CD8-positive, alpha-beta T cell (primary cell): ENCODE measurements at regions of chr3 and their contacts with region 1.

Region 1: GRCh38 chr3:33787328-33788009 is 11.0 kb upstream of the PDCD6IP start:
- DNase-seq: peak; percentile 16 to 83 (median 64)
- ATAC-seq: peak; percentile 87
- H3K4me3 ChIP-seq: no peak overlapping the region
- H3K4me3 Mint-ChIP-seq: peak overlapping the region; percentile 57
- H3K27ac ChIP-seq: no peak overlapping the region
- H3K27ac Mint-ChIP-seq: no peak overlapping the region
- H3K4me1 ChIP-seq: no peaks in the 10 kb centered on the region
- H3K4me1 Mint-ChIP-seq: peaks cover 2% of the 10 kb centered on the region
- H3K27me3 ChIP-seq: peaks cover 0 to 3% of the 10 kb centered on the region in 2 experiments
- H3K27me3 Mint-ChIP-seq: peaks cover 23% of the 10 kb centered on the region
- CTCF ChIP-seq: peak; percentile 89

Region 2: GRCh38 chr3:32733631-32734229 is 1053.7 kb before region 1 on chr3:
- CTCF ChIA-PET with region 1: interaction called, 3 read pairs
- POLR2A ChIA-PET with region 1: no interaction called
- intact Hi-C with region 1: loop called in 1 of 2 experiments (anchors 5 kb)
- DNase-seq: peak in 2 of 9 experiments; percentile 20 to 38
- ATAC-seq: no peak
- H3K4me3 ChIP-seq: no peak overlapping the region
- H3K4me3 Mint-ChIP-seq: no peak overlapping the region
- H3K27ac ChIP-seq: no peak overlapping the region
- H3K27ac Mint-ChIP-seq: no peak overlapping the region
- H3K4me1 ChIP-seq: no peaks in the 10 kb centered on the region
- H3K4me1 Mint-ChIP-seq: no peaks in the 10 kb centered on the region
- H3K27me3 ChIP-seq: no peaks in the 10 kb centered on the region
- H3K27me3 Mint-ChIP-seq: no peaks in the 10 kb centered on the region
- CTCF ChIP-seq: peak; percentile 25

Region 3: DNA sequence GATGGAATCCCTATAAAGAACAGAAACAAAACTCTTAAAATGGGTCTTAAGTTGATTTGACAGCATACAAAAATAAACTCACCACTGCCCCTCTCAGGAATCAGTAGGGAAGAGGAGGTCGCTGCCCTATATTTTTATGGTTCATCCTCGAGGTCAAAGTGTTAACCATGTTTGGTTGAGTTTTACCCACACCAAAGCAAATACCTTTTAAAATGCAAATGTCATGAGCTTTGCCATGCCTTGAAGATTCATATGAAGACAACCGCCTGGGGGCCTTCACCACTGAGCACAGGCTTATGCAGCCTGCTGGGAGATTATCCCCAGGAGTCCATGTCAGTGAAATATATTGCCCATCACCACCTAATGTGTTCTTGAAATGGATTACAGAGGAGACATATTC is 756.7 kb before region 1 on chr3:
- CTCF ChIA-PET with region 1: no interaction called
- POLR2A ChIA-PET with region 1: no interaction called
- intact Hi-C with region 1: no loop called
- DNase-seq: peak in 3 of 9 experiments; percentile 33 to 70 (median 61)
- ATAC-seq: peak; percentile 85
- H3K4me3 ChIP-seq: no peak overlapping the region
- H3K4me3 Mint-ChIP-seq: no peak overlapping the region
- H3K27ac ChIP-seq: no peak overlapping the region
- H3K27ac Mint-ChIP-seq: no peak overlapping the region
- H3K4me1 ChIP-seq: no peaks in the 10 kb centered on the region
- H3K4me1 Mint-ChIP-seq: peaks cover 11% of the 10 kb centered on the region
- H3K27me3 ChIP-seq: no peaks in the 10 kb centered on the region
- H3K27me3 Mint-ChIP-seq: no peaks in the 10 kb centered on the region
- CTCF ChIP-seq: no peak

Region 4: GRCh38 chr3:33131331-33132018 is 656.0 kb before region 1 on chr3:
- CTCF ChIA-PET with region 1: interaction called, 31 read pairs
- POLR2A ChIA-PET with region 1: interaction called, 6 read pairs
- intact Hi-C with region 1: loop called (anchors 1 kb)
- DNase-seq: peak in 4 of 9 experiments; percentile 21 to 61 (median 40)
- ATAC-seq: peak; percentile 69
- H3K4me3 ChIP-seq: no peak overlapping the region
- H3K4me3 Mint-ChIP-seq: no peak overlapping the region
- H3K27ac ChIP-seq: no peak overlapping the region
- H3K27ac Mint-ChIP-seq: no peak overlapping the region
- H3K4me1 ChIP-seq: no peaks in the 10 kb centered on the region
- H3K4me1 Mint-ChIP-seq: peaks cover 3% of the 10 kb centered on the region
- H3K27me3 ChIP-seq: no peaks in the 10 kb centered on the region
- H3K27me3 Mint-ChIP-seq: no peaks in the 10 kb centered on the region
- CTCF ChIP-seq: peak; percentile 84

Region 5: DNA sequence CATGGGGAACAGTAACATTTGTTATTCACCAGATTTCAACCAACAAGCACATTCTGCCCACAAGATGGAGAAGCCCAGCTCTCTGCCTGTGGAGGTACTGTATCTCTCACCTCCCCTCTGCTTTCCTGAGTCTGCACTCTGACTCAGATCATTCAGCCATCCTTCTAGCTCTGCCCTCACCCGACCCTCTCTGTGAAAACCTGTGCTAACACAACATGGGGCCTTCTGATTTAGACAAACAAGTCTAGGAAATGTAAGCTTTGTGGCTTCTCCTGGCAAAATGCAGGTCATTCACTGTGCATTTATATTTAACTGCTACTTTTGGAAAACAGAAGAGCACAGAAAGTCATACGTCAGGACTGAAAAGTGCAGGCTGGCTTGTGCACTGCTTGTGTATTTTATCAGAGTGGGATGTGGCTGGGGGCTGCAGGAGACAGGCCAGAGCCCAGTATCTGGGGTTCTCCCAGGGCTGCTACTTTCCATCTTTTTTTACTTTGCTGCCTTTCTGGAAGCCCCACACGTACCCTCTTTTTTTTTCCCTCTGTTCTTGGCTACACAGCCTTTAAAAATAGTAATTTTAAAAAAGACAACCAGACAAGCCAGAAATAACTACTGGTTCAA is 619.6 kb before region 1 on chr3:
- CTCF ChIA-PET with region 1: no interaction called
- POLR2A ChIA-PET with region 1: no interaction called
- intact Hi-C with region 1: no loop called
- DNase-seq: no peak
- ATAC-seq: no peak
- H3K4me3 ChIP-seq: no peak overlapping the region
- H3K4me3 Mint-ChIP-seq: no peak overlapping the region
- H3K27ac ChIP-seq: no peak overlapping the region
- H3K27ac Mint-ChIP-seq: no peak overlapping the region
- H3K4me1 ChIP-seq: no peaks in the 10 kb centered on the region
- H3K4me1 Mint-ChIP-seq: peaks cover 7% of the 10 kb centered on the region
- H3K27me3 ChIP-seq: no peaks in the 10 kb centered on the region
- H3K27me3 Mint-ChIP-seq: peaks cover 3% of the 10 kb centered on the region
- CTCF ChIP-seq: no peak

Region 6: GRCh38 chr3:33636125-33636850 is 151.2 kb before region 1 on chr3:
- CTCF ChIA-PET with region 1: interaction called, 37 read pairs
- POLR2A ChIA-PET with region 1: no interaction called
- intact Hi-C with region 1: loop called (anchors 1 kb)
- DNase-seq: peak in 2 of 9 experiments; percentile 57 to 68
- ATAC-seq: peak; percentile 71
- H3K4me3 ChIP-seq: no peak overlapping the region
- H3K4me3 Mint-ChIP-seq: no peak overlapping the region
- H3K27ac ChIP-seq: no peak overlapping the region
- H3K27ac Mint-ChIP-seq: no peak overlapping the region
- H3K4me1 ChIP-seq: no peaks in the 10 kb centered on the region
- H3K4me1 Mint-ChIP-seq: peaks cover 2% of the 10 kb centered on the region
- H3K27me3 ChIP-seq: no peaks in the 10 kb centered on the region
- H3K27me3 Mint-ChIP-seq: no peaks in the 10 kb centered on the region
- CTCF ChIP-seq: peak; percentile 63

Region 7: DNA sequence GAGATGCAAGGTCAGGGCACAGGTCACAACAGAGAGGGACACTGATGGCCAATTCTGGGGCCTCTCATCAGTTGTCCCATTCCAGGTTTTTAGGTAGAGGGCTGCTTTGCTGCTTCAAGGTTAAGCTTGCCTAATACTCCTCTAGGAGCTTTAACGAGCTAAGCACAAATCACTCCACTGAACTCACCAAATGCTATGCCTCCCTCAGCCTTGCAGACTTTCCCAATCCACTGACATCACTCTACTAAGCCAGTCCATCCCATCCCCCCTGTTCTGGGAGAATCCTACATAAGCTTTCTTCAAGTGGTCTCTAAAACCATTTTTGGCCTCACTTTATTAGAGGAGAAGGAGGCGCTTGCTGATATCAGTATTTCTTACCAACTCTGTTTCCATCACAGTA is 13.8 kb before region 1 on chr3:
- CTCF ChIA-PET with region 1: interaction called, 24 read pairs
- POLR2A ChIA-PET with region 1: interaction called, 3 read pairs
- intact Hi-C with region 1: no loop called
- DNase-seq: no peak
- ATAC-seq: no peak
- H3K4me3 ChIP-seq: no peak overlapping the region
- H3K4me3 Mint-ChIP-seq: no peak overlapping the region
- H3K27ac ChIP-seq: no peak overlapping the region
- H3K27ac Mint-ChIP-seq: no peak overlapping the region
- H3K4me1 ChIP-seq: no peaks in the 10 kb centered on the region
- H3K4me1 Mint-ChIP-seq: no peaks in the 10 kb centered on the region
- H3K27me3 ChIP-seq: no peaks in the 10 kb centered on the region
- H3K27me3 Mint-ChIP-seq: peaks cover 4% of the 10 kb centered on the region
- CTCF ChIP-seq: no peak

Region 8: GRCh38 chr3:33807190-33807589 is 19.7 kb after region 1 on chr3:
- CTCF ChIA-PET with region 1: interaction called, 44 read pairs
- POLR2A ChIA-PET with region 1: no interaction called
- intact Hi-C with region 1: no loop called
- DNase-seq: no peak
- ATAC-seq: no peak
- H3K4me3 ChIP-seq: no peak overlapping the region
- H3K4me3 Mint-ChIP-seq: no peak overlapping the region
- H3K27ac ChIP-seq: no peak overlapping the region
- H3K27ac Mint-ChIP-seq: peak overlapping the region; percentile 24
- H3K4me1 ChIP-seq: peaks cover 52% of the 10 kb centered on the region
- H3K4me1 Mint-ChIP-seq: peaks cover 84% of the 10 kb centered on the region
- H3K27me3 ChIP-seq: no peaks in the 10 kb centered on the region
- H3K27me3 Mint-ChIP-seq: no peaks in the 10 kb centered on the region
- CTCF ChIP-seq: no peak

Region 9: DNA sequence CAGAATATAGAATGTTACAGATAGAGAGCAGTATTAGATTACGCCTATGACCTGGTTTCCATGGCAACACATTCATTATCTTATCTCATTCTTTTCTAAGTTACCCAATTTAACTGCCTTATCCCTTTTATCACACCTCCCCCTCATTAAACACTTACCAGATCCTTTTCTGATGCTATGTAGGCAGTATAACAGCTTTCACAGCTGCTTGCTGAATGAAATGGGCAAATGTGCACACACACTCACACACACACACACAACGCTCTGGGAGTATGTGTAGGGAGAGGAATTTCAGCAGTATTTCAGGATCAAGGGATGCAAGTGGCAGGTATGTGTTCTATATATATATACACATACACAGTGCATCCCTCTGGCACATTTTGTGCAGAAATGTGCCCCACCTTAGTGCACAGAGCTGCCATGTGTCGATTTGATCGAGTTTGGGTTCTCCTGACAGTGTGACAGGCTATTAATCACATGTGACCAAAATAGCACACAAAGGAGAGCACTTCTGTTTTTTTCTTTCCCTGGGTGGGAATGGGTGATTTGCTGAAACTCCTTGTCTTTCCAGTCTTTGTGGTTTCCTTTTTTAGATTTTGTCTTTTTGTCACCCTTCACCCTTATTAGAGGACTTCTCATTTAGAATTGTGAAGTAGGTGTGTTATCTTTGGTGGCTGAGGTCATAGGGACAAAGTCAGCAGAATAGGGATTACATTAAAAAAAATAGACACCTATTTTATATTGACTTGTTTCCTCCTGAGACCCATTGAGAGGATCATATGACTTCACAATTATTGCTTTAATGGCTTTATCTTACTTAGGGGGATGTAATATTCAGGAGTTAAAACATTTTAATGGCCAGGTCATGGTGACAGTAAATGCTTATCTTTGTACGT is 564.7 kb after region 1 on chr3:
- CTCF ChIA-PET with region 1: no interaction called
- POLR2A ChIA-PET with region 1: no interaction called
- intact Hi-C with region 1: no loop called
- DNase-seq: no peak
- ATAC-seq: no peak
- H3K4me3 ChIP-seq: no peak overlapping the region
- H3K4me3 Mint-ChIP-seq: no peak overlapping the region
- H3K27ac ChIP-seq: no peak overlapping the region
- H3K27ac Mint-ChIP-seq: no peak overlapping the region
- H3K4me1 ChIP-seq: no peaks in the 10 kb centered on the region
- H3K4me1 Mint-ChIP-seq: no peaks in the 10 kb centered on the region
- H3K27me3 ChIP-seq: no peaks in the 10 kb centered on the region
- H3K27me3 Mint-ChIP-seq: no peaks in the 10 kb centered on the region
- CTCF ChIP-seq: no peak